Left ventricle myocardium inferior (tissue), 1 donor: ENCODE measurements at regions of chr3 and their contacts with region 1.

Region 1: DNA sequence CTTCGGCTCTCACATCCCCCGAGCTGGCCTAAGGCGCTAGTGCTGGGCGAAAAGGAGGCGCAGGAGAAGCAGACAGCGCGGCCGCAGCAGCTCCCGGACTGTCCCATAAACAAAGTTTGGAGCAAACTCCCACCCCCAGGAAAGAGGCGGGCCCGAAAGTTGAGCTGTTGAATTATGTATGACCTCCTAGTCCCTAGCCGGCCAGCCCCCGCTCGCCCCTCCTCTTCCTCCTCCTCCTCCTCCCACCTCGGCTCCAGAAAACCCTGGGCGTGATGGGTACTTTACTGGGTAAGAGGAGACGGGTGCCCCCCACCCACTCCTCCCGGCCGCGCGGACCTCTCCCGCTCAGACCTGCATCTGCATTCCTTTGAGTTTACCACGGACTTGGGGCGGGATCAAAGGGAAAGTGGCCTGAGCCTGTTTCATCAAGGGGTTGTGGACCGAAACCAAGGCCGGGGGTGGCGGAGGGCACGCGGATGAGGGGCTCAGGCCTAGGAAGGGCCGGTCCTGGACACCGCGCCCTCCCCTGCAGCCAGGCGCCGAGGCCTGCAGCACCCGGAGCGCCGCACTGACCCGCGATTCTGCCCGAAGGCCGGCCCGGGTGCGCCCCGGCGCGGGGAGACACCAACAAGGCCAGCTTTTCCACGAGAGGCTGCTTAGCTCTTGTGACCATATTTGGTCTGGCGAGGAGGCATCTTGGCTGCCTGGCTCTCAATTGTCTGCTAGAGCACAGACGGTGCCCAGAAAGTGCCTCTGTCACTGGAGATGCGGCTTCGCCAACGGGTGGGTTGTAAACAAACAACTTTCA is at the start of gene WWTR1:
- DNase-seq: peak; percentile 95
- H3K4me3 ChIP-seq: peak within 1 kb of the TSS; percentile 78
- H3K27ac ChIP-seq: peak within 1 kb of the TSS; percentile 100
- H3K4me1 ChIP-seq: peaks cover 69% of the 10 kb centered on the region
- H3K27me3 ChIP-seq: no peaks in the 10 kb centered on the region
- CTCF ChIP-seq: peak; percentile 41
- total RNA-seq, gene WWTR1: 39.1 TPM

Region 2: GRCh38 chr3:149575961-149576564 is 82.1 kb before region 1 on chr3:
- intact Hi-C with region 1: loop called (anchors 10 kb)
- DNase-seq: no peak
- H3K4me3 ChIP-seq: peak overlapping the region; percentile 7
- H3K27ac ChIP-seq: peak overlapping the region; percentile 79
- H3K4me1 ChIP-seq: peaks cover 100% of the 10 kb centered on the region
- H3K27me3 ChIP-seq: no peaks in the 10 kb centered on the region
- CTCF ChIP-seq: no peak